ENCODE measurements at regions of chr7 and their contacts with region 1.

Region 1: DNA sequence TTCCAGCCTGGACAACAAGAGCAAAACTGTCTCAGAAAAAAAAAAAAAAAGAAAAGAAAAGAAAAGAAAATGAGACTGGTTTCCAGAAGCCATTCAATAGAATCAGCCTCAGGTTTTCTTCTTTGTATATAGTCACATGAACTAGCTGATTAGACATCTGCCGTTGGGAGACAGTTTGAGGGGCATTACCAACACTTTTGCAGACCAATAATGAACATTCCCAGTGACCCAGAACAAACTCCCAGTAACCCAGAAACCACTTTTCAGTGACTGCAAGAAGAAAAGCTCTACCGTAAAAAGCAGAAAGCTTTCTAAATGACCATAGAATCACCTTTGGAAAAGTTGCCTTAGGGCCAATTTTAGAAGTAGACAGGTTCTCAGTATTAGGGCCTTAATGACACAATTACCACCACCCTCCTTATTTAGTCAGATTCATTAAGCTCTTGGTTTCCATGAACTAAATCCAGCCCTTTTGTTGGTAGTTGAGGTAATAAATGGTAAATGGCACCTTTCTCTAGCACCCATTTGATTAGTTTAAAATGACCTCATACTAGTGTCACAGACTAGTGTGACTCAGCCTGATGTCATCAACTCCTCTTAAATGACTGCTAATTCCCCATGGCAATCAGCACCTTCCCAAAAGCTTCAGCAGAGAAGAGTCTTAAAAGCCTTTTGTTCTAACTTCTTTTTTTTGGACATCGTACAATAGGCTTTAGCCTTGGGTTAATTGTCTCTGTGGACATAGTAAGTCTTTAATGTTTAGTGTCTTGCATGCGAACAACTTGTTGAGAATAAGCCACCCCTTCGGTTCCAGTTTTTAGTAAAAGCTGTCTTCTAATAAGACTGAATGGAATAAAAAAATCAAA is 33.6 kb upstream of the XRCC2 start:
- DNase-seq: peak in 3 of 4 experiments; percentile 32 to 60 (median 39)
- ATAC-seq: peak; percentile 11; the same call in 1 of the 3 replicates
- H3K4me3 ChIP-seq: no peak overlapping the region
- H3K27ac ChIP-seq: no peak overlapping the region
- H3K4me1 ChIP-seq: peaks cover 0 to 4% of the 10 kb centered on the region in 2 experiments; a peak in 2 of 5 replicates
- H3K27me3 ChIP-seq: no peaks in the 10 kb centered on the region
- CTCF ChIP-seq: no peak
- EP300 ChIP-seq: no peak
- POLR2A ChIP-seq: no peak
- RAD21 ChIP-seq: no peak

Region 2: GRCh38 chr7:151711906-151712809 is 997.4 kb before region 1 on chr7:
- CTCF ChIA-PET with region 1: no interaction called
- POLR2A ChIA-PET with region 1: no interaction called
- in situ Hi-C with region 1: no loop called
- intact Hi-C with region 1: no loop called
- DNase-seq: no peak
- ATAC-seq: peak; percentile 13; the same call in 1 of the 3 replicates
- H3K4me3 ChIP-seq: no peak overlapping the region
- H3K27ac ChIP-seq: no peak overlapping the region
- H3K4me1 ChIP-seq: peaks cover 0 to 4% of the 10 kb centered on the region in 2 experiments; a peak in 1 of 5 replicates
- H3K27me3 ChIP-seq: peaks cover 42 to 85% of the 10 kb centered on the region in 2 experiments
- CTCF ChIP-seq: no peak
- EP300 ChIP-seq: no peak
- POLR2A ChIP-seq: no peak
- RAD21 ChIP-seq: no peak

Region 3: GRCh38 chr7:152162287-152162686 is 547.2 kb before region 1 on chr7:
- CTCF ChIA-PET with region 1: no interaction called
- POLR2A ChIA-PET with region 1: interaction called, 4 read pairs
- in situ Hi-C with region 1: no loop called
- intact Hi-C with region 1: loop called (anchors 10 kb)
- DNase-seq: no peak
- ATAC-seq: peak; percentile 36; the same call in 2 of the 3 replicates
- H3K4me3 ChIP-seq: no peak overlapping the region
- H3K27ac ChIP-seq: no peak overlapping the region
- H3K4me1 ChIP-seq: no peaks in the 10 kb centered on the region
- H3K27me3 ChIP-seq: no peaks in the 10 kb centered on the region
- CTCF ChIP-seq: no peak
- EP300 ChIP-seq: no peak
- POLR2A ChIP-seq: no peak
- RAD21 ChIP-seq: no peak

Region 4: DNA sequence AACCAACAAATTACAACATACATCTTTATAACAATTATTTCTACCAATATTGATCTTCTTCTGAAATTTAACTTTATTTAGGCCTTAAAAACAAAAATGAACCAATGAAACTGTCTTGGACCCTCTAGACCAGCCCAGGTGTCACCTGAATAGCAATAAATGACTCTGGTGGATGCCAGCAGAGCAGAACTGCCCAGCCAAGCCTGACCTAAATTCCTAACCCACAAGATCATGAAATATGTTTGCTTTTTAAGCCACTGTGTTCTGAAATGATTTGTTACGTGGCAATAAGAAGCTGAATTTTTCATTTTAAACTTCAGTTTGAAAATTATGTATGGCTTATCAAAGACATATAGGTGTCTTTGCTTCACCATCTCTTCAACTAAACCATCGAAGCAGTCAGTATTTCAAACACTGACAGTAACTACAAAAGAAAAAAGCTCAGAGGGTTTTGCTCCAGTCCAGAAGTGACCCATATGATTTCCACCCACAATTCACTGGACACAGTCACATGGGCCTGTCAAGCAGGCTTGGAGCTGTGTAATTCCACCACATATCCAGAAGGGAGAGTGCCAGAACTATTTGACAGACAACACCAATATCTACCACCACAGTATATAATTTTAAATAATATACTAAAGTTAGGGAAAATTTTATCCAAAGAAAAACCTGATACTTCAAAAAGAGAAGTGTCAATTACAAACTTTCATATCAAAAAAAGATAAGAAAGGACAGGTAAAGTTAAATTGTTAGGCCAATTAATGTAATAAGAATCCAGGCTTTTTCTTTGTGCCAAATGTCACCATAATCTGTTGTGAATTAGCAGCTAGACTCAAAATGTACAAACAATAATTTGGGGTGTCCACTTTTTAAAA is 368.2 kb before region 1 on chr7:
- CTCF ChIA-PET with region 1: interaction called, 13 read pairs
- POLR2A ChIA-PET with region 1: interaction called, 6 read pairs
- in situ Hi-C with region 1: no loop called
- intact Hi-C with region 1: loop called (anchors 1 kb)
- DNase-seq: peak in 3 of 4 experiments; percentile 35 to 84 (median 81)
- ATAC-seq: peak; percentile 99
- H3K4me3 ChIP-seq: no peak overlapping the region
- H3K27ac ChIP-seq: no peak overlapping the region
- H3K4me1 ChIP-seq: peaks cover 0 to 5% of the 10 kb centered on the region in 2 experiments; a peak in 2 of 5 replicates
- H3K27me3 ChIP-seq: no peaks in the 10 kb centered on the region
- CTCF ChIP-seq: peak; percentile 69 to 91 (median 75)
- EP300 ChIP-seq: no peak
- POLR2A ChIP-seq: no peak
- RAD21 ChIP-seq: peak; percentile 78 to 83

Region 5: GRCh38 chr7:152574892-152575640 is 134.5 kb before region 1 on chr7:
- CTCF ChIA-PET with region 1: no interaction called
- POLR2A ChIA-PET with region 1: no interaction called
- in situ Hi-C with region 1: no loop called
- intact Hi-C with region 1: loop called (anchors 5 kb)
- DNase-seq: no peak
- ATAC-seq: peak; percentile 22
- H3K4me3 ChIP-seq: no peak overlapping the region
- H3K27ac ChIP-seq: no peak overlapping the region
- H3K4me1 ChIP-seq: no peaks in the 10 kb centered on the region
- H3K27me3 ChIP-seq: peaks cover 43 to 71% of the 10 kb centered on the region in 2 experiments
- CTCF ChIP-seq: no peak
- EP300 ChIP-seq: no peak
- POLR2A ChIP-seq: no peak
- RAD21 ChIP-seq: no peak

Region 6: GRCh38 chr7:152660021-152660420 is 49.5 kb before region 1 on chr7:
- CTCF ChIA-PET with region 1: no interaction called
- POLR2A ChIA-PET with region 1: no interaction called
- in situ Hi-C with region 1: no loop called
- intact Hi-C with region 1: no loop called
- DNase-seq: no peak
- ATAC-seq: no peak
- H3K4me3 ChIP-seq: no peak overlapping the region
- H3K27ac ChIP-seq: no peak overlapping the region
- H3K4me1 ChIP-seq: no peaks in the 10 kb centered on the region; a peak in 1 of 5 replicates
- H3K27me3 ChIP-seq: no peaks in the 10 kb centered on the region
- CTCF ChIP-seq: no peak
- EP300 ChIP-seq: no peak
- POLR2A ChIP-seq: no peak
- RAD21 ChIP-seq: no peak